ENCODE measurements at regions of chr9 and their contacts with region 1.

Region 1: DNA sequence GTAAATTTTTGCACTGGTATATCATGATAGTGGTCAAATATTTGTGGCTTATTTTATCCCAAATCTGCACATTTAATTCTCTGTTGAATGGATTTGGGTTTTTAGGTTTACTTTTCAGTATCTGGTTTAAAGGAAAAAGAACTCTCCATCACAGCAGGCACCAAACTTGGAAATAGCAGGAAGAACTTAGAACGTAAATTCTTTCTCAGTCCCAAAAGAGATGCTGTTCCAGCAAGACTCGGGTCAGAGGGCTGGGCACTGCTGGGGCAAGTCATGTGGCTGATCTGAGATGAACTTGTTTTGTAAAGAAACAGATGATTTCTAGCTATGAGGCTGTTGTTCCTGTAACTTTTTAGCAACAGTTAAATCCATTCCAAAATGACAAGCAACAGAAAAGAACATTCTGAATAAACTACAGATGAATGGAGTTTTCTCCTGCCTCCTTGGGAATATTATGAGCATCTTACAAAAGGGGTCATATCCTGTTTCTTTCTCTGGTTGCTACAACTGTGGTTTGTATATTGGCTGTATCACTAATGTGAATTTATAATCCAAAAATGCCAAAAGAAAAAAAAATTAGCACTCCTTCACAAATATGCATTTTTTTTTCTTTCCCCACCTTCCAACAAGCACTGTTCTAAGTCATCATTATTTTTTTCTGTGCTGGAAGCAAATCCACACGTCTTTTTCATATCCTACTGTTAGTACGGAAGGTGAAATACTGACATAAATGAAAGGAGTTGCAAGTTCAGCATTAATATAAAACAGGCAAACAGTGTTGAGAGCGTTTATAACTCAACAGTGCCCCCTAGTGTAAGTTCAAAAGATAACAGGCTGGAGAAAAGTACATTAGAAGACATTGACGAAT is 31.1 kb downstream of the OR2K2 start:
- ATAC-seq: peak in 7 of 8 experiments; percentile 42 to 91 (median 63)
- H3K4me3 ChIP-seq: no peak overlapping the region
- H3K27ac ChIP-seq: no peak overlapping the region
- H3K4me1 ChIP-seq: peaks cover 0 to 3% of the 10 kb centered on the region in 2 donors

Region 2: DNA sequence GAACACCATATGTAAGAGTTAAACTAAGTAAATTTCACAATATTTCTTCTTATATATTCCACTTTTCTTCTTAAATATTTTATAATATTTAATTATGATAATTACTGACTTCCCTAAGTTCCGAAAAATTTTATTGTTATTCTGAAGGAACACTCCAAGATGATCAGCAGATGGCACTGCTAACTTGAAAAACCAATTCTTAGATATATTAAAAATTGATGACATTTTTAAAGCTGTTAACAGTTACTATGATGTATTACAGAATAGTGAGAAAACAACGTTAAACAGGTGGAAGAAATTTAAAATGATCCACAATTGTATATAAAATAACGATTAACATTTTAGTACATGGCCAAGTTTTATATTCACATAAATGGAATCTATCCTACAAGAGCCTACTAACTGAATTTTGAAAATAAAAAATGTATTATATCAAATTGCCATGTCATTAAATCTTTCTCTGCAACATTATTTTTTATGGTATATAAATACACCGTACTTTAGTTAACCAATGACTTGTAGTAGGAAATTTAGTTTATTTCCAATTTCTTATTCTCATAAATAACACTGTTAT is 660.5 kb before region 1 on chr9:
- in situ Hi-C with region 1: loop called in 4 of 9 experiments (anchors 10 to 25 kb)
- ATAC-seq: peak in 2 of 8 experiments; percentile 16 to 33
- H3K4me3 ChIP-seq: no peak overlapping the region
- H3K27ac ChIP-seq: no peak overlapping the region
- H3K4me1 ChIP-seq: no peaks in the 10 kb centered on the region

Region 3: DNA sequence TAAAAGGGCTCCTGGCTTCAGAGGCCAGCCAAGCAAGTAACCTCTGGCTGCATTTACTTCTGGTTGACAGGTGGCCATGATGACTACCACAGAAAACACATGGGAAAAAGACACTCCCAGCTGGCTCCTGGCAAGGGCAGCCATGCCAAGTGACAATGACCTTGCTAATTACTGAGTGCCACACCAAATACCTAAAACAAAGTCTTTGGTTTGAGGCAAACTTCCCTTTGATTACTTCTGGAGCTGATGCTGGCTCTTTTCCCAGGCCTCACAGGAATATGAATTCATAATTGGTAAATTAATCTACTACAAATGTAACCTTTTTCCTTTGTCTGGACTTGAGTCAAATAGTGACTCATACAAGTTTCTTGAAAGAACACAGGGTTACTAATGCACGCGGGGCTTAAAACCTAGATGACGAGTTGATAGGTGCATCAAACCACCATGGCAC is 321.7 kb before region 1 on chr9:
- in situ Hi-C with region 1: no loop called
- ATAC-seq: no peak
- H3K4me3 ChIP-seq: no peak overlapping the region
- H3K27ac ChIP-seq: no peak overlapping the region
- H3K4me1 ChIP-seq: no peaks in the 10 kb centered on the region

Region 4: GRCh38 chr9:111037381-111038305 is 261.3 kb before region 1 on chr9:
- in situ Hi-C with region 1: loop called in 1 of 9 experiments (anchors 25 kb)
- ATAC-seq: peak; percentile 16 to 90 (median 86)
- H3K4me3 ChIP-seq: peak overlapping the region; percentile 41 to 57 (median 50)
- H3K27ac ChIP-seq: no peak overlapping the region
- H3K4me1 ChIP-seq: peaks cover 4 to 14% of the 10 kb centered on the region in 2 donors

Region 5: GRCh38 chr9:111068771-111069170 is 230.2 kb before region 1 on chr9:
- in situ Hi-C with region 1: loop called in 1 of 9 experiments (anchors 25 kb)
- ATAC-seq: peak in 2 of 8 experiments; percentile 31 to 56
- H3K4me3 ChIP-seq: no peak overlapping the region
- H3K27ac ChIP-seq: no peak overlapping the region
- H3K4me1 ChIP-seq: peaks cover 0 to 2% of the 10 kb centered on the region in 2 donors

Region 6: DNA sequence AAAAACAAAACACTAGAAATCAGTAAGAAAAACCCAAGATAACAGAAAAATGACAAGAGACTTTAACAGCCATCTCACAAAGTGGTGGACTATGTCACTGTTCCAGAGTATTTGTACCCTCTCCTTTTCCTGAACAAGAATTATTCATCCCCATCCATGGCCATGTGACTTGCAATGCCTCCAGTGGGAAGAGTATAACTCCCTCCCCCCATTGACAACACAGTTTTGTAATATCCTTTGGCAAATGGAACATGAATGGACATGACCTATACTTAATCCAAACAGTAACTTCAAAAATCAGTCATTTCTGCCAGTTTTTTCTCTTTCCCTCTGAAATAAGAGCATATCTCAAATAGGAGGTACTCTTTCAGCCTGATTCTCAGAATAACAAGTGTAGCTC is 1000.5 kb after region 1 on chr9:
- in situ Hi-C with region 1: no loop called
- ATAC-seq: peak in 3 of 8 experiments; percentile 47 to 78 (median 73)
- H3K4me3 ChIP-seq: no peak overlapping the region
- H3K27ac ChIP-seq: no peak overlapping the region
- H3K4me1 ChIP-seq: no peaks in the 10 kb centered on the region

Measured in motor neuron (in vitro differentiated cells).